Vagina (tissue), 2 donors: ENCODE measurements at regions of chr3 and their contacts with region 1.

Region 1: DNA sequence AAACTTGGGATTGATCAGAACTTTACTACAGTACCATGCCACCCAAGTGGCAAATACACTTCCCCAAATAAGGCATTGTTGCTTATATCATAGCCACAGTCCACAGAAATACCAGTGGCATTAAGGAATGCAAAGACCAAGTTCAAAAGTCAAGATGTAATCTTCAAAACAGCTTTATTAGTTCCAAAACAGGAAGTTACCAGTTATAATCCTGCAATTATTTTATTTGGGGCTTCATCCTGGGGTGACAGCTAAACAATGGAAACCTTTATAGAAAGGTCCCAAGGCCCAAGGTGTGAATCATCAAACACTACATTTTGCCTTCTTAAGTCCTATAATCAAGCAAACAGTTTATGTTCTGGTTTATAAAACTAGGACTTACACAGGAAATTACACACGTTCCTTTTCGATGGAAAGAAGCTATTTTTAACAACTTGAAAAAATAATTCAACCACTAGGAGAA is 30.3 kb upstream of the RNF7 start:
- DNase-seq: no peak
- H3K4me3 ChIP-seq: no peak overlapping the region
- H3K27ac ChIP-seq: peak overlapping the region; percentile 9
- H3K4me1 ChIP-seq: no peaks in the 10 kb centered on the region
- H3K27me3 ChIP-seq: no peaks in the 10 kb centered on the region
- CTCF ChIP-seq: no peak
- POLR2A ChIP-seq: no peak

Region 2: DNA sequence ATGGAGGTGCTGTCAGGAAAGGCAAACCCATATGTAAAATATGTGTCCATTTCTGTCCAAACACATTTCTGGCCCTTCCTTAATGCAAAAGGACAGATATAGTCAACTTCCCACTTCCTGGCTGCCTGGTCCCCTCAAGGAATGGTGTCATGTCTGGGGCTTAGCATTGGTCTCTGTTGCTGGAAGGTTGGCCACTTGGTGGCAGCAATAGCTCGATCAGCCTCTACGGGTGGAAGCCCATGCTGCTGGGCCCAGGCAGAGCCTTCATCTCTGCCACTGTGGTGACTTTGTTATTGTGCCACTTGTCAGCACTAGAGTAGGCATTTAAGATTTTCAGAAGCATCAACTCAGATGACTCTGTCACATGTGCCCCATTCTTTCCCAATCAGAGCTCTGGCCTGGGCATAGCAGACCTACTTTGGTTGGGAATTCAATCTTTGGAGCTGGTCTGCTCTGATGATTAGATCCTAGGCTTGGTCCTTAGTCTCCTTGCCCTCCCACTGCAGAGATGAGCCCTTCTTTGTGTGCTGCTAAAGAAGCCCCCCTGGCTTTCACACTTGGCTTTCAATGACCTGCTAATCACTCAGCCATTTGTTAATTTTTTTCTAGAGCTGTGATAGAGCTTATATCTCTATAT is 707.6 kb before region 1 on chr3:
- intact Hi-C with region 1: no loop called
- DNase-seq: no peak
- H3K4me3 ChIP-seq: no peak overlapping the region
- H3K27ac ChIP-seq: no peak overlapping the region
- H3K4me1 ChIP-seq: no peaks in the 10 kb centered on the region
- H3K27me3 ChIP-seq: no peaks in the 10 kb centered on the region
- CTCF ChIP-seq: peak in 2 of 3 experiments; percentile 44 to 54
- POLR2A ChIP-seq: no peak

Region 3: DNA sequence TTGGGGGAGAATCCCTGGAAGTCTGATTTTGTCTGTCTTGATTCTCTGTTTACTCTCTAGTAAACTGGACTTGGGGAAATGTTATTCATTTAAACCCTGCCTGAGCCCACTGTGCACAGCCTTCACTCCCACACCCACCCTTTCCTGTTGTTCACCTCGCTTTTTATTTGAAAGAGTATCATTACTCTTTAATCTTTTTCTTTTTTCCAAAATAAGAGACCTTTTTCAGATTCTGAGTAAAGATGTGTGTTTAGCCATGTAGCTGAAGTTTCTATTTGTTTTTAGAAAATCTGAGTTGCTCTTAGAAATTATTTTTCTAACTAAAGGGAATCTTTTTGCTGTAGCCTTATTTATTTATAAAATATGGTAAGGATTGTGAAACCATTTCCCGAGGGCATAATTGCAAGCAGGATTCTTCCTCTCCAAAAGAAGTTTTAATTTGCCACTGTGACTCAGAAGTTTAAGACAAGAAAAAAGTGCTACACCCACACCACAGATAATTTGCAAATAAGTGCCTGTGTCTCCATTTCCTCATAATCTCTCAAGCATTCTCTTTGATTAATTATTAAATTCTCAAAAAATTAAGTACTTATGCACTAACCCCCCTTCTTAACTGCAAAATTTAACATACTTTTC is 177.5 kb before region 1 on chr3:
- intact Hi-C with region 1: no loop called
- DNase-seq: no peak
- H3K4me3 ChIP-seq: no peak overlapping the region
- H3K27ac ChIP-seq: peak overlapping the region; percentile 58
- H3K4me1 ChIP-seq: peaks cover 30% of the 10 kb centered on the region
- H3K27me3 ChIP-seq: no peaks in the 10 kb centered on the region
- CTCF ChIP-seq: no peak
- POLR2A ChIP-seq: no peak

Region 4: DNA sequence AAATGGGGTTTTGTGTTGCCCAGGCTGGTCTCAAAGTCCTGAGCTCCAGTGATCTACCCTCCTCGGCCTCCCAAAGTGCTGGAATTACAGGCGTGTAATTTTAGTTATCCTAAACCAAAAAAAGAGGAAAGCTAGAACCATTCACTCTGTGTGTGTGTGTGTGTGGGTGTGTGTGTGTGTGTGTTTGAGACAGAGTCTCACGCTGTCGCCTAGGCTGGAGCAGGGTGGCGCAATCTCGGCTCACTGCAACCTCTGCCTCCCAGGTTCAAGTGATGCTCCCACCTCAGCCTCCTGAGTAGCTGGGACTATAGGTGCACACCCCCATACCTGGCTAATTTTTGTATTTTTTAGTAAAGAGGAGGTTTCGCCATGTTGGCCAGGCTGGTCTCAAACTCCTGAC is 357.6 kb after region 1 on chr3:
- intact Hi-C with region 1: loop called (anchors 5 kb)
- DNase-seq: no peak
- H3K4me3 ChIP-seq: no peak overlapping the region
- H3K27ac ChIP-seq: no peak overlapping the region
- H3K4me1 ChIP-seq: no peaks in the 10 kb centered on the region
- H3K27me3 ChIP-seq: no peaks in the 10 kb centered on the region
- CTCF ChIP-seq: no peak
- POLR2A ChIP-seq: no peak